ENCODE measurements at regions of chr19 and their contacts with region 1.

Region 1: GRCh38 chr19:44113138-44113783 is at the start of gene ZNF225:
- DNase-seq: peak; percentile 98
- H3K4me3 ChIP-seq: peak within 1 kb of the TSS; percentile 66 to 84 (median 68)
- H3K27ac ChIP-seq: peak within 1 kb of the TSS; percentile 65 to 88 (median 78)
- H3K4me1 ChIP-seq: peaks cover 14 to 23% (median 20%) of the 10 kb centered on the region in 4 donors
- H3K27me3 ChIP-seq: no peaks in the 10 kb centered on the region
- CTCF ChIP-seq: peak in 2 of 3 experiments; percentile 21 to 26
- EP300 ChIP-seq: no peak
- POLR2A ChIP-seq: no peak
- total RNA-seq, gene ZNF225: 3.3 to 6.2 (median 3.9) TPM

Region 2: GRCh38 chr19:44002566-44003460 is 110.4 kb before region 1 on chr19 and contains the start of gene ZNF230:
- intact Hi-C with region 1: loop called (anchors 5 kb)
- DNase-seq: peak; percentile 96
- H3K4me3 ChIP-seq: peak within 1 kb of the TSS; percentile 65 to 79 (median 74)
- H3K27ac ChIP-seq: peak within 1 kb of the TSS; percentile 75 to 83 (median 80)
- H3K4me1 ChIP-seq: peaks cover 12 to 18% (median 14%) of the 10 kb centered on the region in 4 donors
- H3K27me3 ChIP-seq: no peaks in the 10 kb centered on the region
- CTCF ChIP-seq: peak in 1 of 3 experiments; percentile 18
- EP300 ChIP-seq: no peak
- POLR2A ChIP-seq: no peak
- total RNA-seq, gene ZNF230: 2.7 to 7.5 (median 3.5) TPM

Region 3: DNA sequence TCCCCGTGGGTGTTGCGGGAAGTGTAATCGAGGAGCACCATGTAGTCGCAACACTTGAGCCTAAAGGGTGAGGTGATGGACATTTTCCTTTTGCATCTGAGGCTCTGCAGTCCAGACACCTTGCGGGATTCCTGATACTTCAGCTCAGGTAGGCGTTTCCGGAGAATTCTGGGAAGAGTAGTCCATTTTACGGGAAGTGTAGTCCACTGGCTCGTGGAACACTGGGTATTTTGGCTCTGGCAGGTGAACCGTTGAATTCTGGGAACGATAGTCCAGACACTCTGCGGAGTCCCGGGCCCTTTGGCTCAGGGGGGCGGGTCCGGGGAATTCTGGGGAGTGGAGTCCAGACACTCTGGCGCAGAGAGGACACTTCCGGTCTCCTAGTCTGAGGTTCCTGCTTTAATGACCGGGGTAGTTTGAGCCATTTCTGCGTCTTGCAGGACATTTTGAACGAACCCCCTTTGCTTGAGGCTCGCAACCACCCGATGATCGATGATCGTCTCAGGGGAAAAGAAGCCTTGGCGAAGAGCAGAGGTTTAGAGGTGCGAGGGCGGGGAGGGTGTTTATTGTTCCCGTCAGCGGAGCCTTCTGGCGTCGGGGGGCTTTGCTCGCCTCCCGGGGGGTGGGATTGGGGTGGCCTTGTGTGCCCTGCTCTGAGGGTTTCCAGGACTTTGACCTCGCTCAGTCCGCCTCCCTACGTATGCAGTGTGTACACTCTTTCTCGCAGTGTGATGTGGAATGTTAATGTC is 61.4 kb before region 1 on chr19 and contains the start of gene ZNF223:
- intact Hi-C with region 1: loop called (anchors 5 kb)
- DNase-seq: peak; percentile 97
- H3K4me3 ChIP-seq: peak within 1 kb of the TSS; percentile 64 to 80 (median 72)
- H3K27ac ChIP-seq: peak within 1 kb of the TSS; percentile 70 to 77 (median 75)
- H3K4me1 ChIP-seq: peaks cover 14 to 21% (median 19%) of the 10 kb centered on the region in 4 donors
- H3K27me3 ChIP-seq: peaks cover 0 to 30% (median 0%) of the 10 kb centered on the region in 4 donors
- CTCF ChIP-seq: no peak
- EP300 ChIP-seq: peak; percentile 47
- POLR2A ChIP-seq: no peak
- total RNA-seq, gene ZNF223: 0.83 to 2.6 (median 2.5) TPM

Region 4: GRCh38 chr19:44071824-44072542 is 41.3 kb before region 1 on chr19 and contains the start of gene ZNF284:
- intact Hi-C with region 1: loop called (anchors 5 kb)
- DNase-seq: peak; percentile 96
- H3K4me3 ChIP-seq: peak within 1 kb of the TSS; percentile 54 to 75 (median 74)
- H3K27ac ChIP-seq: peak within 1 kb of the TSS; percentile 53 to 70 (median 66)
- H3K4me1 ChIP-seq: peaks cover 13 to 20% (median 16%) of the 10 kb centered on the region in 4 donors
- H3K27me3 ChIP-seq: no peaks in the 10 kb centered on the region
- CTCF ChIP-seq: no peak
- EP300 ChIP-seq: no peak
- POLR2A ChIP-seq: no peak
- total RNA-seq, gene ZNF284: 1.3 to 2.9 (median 2.5) TPM

Region 5: DNA sequence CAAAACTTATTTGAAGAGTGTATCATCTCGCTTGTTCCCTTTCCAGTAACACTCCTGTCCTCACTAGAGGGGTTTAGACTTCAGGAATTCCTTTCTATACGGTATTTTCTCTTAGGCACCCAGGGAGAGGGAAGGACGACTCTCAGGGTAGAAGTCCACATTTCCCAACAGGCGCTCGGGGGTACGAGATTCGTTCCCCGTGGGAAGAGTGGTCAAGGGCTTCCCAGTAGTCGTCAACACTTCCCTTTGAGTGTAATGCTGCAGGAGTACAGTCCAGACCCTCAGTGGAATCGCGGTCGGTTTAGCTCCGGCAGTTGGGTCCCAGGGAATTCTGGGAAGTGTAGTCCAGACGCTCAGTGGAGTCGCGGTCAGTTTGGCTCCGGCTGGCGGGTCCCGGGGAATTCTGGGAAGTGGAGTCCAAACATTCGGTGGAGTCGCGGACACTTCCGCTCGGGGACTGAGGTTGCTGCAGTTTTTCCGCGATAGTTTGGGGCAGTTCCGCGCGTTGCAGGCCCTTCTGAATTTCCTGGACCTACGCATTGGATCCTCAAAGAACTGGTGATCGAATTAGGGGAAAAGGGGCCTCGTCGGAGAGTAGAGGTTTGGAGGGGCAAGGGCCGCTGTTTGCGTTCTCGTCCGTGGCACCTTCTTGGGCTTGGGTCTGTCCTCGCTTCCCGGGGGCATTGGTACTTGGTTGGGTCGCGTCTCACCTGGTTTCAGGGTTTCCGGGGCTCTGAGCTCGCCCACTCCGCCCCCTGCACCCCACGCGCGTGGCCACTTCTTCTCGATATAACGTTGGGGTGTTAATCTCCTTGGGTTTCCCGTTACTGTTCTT is 19.1 kb before region 1 on chr19 and contains the start of gene ZNF224:
- intact Hi-C with region 1: loop called (anchors 2 kb)
- DNase-seq: peak; percentile 97
- H3K4me3 ChIP-seq: peak within 1 kb of the TSS; percentile 59 to 76 (median 72)
- H3K27ac ChIP-seq: peak within 1 kb of the TSS; percentile 68 to 79 (median 78)
- H3K4me1 ChIP-seq: peaks cover 7 to 22% (median 17%) of the 10 kb centered on the region in 4 donors
- H3K27me3 ChIP-seq: no peaks in the 10 kb centered on the region
- CTCF ChIP-seq: no peak
- EP300 ChIP-seq: no peak
- POLR2A ChIP-seq: no peak
- total RNA-seq, gene ZNF224: 12.4 to 28.7 (median 16.2) TPM

Region 6: DNA sequence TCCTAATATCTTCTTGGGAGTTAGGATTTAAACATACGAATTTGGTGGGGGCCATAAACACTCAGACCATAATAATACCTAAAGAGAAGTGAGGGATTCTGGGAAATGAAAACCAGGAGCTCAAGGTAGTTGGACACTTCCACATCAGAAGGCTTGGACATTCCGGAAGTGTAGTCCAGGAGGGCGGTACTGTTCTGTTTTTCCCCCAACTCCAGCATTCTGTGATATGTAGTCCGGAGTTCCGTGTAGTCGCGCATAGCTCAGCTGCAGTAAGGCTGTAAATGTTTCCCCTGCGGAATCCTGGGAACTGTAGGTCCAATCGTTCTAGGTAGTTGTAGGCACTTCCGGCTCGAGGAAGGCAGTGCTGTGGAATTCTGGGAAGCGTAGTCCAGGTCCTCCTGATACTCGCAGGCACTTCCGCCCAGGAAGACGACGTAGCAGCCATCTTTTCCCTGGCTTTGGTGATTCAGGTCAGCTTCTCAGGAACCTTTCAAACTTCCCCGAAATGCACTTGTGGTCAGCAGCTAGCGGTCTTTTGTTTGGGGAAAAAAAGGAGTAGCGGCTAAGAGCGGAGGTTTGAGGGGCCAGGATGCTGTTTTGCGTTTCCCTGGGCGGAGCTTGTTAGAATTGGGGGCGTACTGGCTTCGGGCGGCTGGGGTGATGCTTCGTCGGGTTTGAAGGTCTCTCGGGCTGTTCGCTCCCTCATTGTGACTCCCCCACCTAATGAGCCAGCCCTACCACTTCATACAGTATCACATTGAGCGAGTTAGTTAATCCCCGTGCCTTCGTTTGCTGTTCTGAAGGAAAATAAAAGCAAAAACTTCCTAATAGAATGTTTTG is 51.6 kb after region 1 on chr19 and contains the start of gene ZNF226:
- intact Hi-C with region 1: loop called (anchors 5 kb)
- DNase-seq: peak; percentile 95
- H3K4me3 ChIP-seq: peak within 1 kb of the TSS; percentile 67 to 82 (median 71)
- H3K27ac ChIP-seq: peak within 1 kb of the TSS; percentile 78 to 88 (median 87)
- H3K4me1 ChIP-seq: peaks cover 9 to 15% (median 13%) of the 10 kb centered on the region in 4 donors
- H3K27me3 ChIP-seq: no peaks in the 10 kb centered on the region
- CTCF ChIP-seq: no peak
- EP300 ChIP-seq: no peak
- POLR2A ChIP-seq: no peak
- total RNA-seq, gene ZNF226: 12.9 to 14.4 (median 13.2) TPM